CD4-positive, alpha-beta memory T cell (primary cell): ENCODE measurements at regions of chr2 and their contacts with region 1.

Region 1: GRCh38 chr2:202588647-202589581 is 45.9 kb upstream of the FAM117B start:
- DNase-seq: peak; percentile 71 to 77 (median 72)
- H3K4me3 ChIP-seq: no peak overlapping the region
- H3K4me3 Mint-ChIP-seq: peak overlapping the region in 2 of 8 donors; percentile 43 to 50
- H3K27ac ChIP-seq: no peak overlapping the region
- H3K27ac Mint-ChIP-seq: peak overlapping the region in 1 of 7 donors; percentile 4
- H3K4me1 ChIP-seq: peaks cover 5% of the 10 kb centered on the region
- H3K4me1 Mint-ChIP-seq: peaks cover 4 to 8% (median 7%) of the 10 kb centered on the region in 4 donors
- H3K27me3 ChIP-seq: no peaks in the 10 kb centered on the region
- H3K27me3 Mint-ChIP-seq: peaks cover 0 to 2% of the 10 kb centered on the region in 2 donors

Region 2: DNA sequence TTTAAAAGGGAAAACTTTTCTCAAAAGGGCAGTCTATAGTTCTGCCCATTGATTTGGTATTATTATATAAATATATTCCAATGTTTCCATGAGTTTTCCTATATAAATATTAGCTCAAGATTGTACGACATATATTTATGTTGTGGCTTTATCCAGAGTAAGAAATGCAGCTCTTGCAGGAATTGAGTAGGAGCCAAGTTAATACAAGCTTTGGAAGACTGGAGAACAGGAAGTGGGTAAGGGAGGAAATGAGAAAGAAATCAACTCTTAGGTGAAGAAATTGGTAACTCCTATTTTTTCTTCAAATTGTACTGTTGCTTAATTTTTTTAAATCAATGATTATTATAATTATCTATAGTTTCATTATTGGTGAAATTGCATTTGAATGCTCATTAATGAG is 59.5 kb before region 1 on chr2:
- CTCF ChIA-PET with region 1: no interaction called
- POLR2A ChIA-PET with region 1: no interaction called
- intact Hi-C with region 1: no loop called
- DNase-seq: no peak
- H3K4me3 ChIP-seq: no peak overlapping the region
- H3K4me3 Mint-ChIP-seq: peak overlapping the region in 4 of 8 donors; percentile 26 to 76 (median 45)
- H3K27ac ChIP-seq: no peak overlapping the region
- H3K27ac Mint-ChIP-seq: no peak overlapping the region
- H3K4me1 ChIP-seq: peaks cover 19% of the 10 kb centered on the region
- H3K4me1 Mint-ChIP-seq: peaks cover 8 to 23% (median 16%) of the 10 kb centered on the region in 4 donors
- H3K27me3 ChIP-seq: no peaks in the 10 kb centered on the region
- H3K27me3 Mint-ChIP-seq: no peaks in the 10 kb centered on the region

Region 3: DNA sequence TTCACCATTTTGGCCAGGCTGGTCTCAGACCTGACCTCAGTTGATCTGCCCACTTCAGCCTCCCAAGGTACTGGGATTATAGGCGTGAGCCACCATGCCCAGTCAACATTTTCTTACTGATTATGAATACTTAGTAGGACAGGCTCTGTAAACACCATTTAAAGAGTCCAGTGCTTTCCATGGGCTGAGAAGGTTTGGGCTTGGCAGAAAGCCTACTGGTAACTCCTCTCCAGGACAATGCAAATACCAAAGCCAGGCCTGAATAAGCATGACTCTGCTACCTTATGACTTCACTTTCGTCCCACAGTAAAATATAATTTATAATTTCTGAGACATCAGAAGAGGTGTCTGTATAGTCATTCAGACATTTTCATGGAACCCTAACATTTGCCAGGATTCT is 14.4 kb before region 1 on chr2:
- CTCF ChIA-PET with region 1: interaction called, 16 read pairs
- POLR2A ChIA-PET with region 1: no interaction called
- intact Hi-C with region 1: no loop called
- DNase-seq: no peak
- H3K4me3 ChIP-seq: no peak overlapping the region
- H3K4me3 Mint-ChIP-seq: no peak overlapping the region
- H3K27ac ChIP-seq: no peak overlapping the region
- H3K27ac Mint-ChIP-seq: peak overlapping the region in 1 of 7 donors; percentile 37
- H3K4me1 ChIP-seq: no peaks in the 10 kb centered on the region
- H3K4me1 Mint-ChIP-seq: no peaks in the 10 kb centered on the region
- H3K27me3 ChIP-seq: no peaks in the 10 kb centered on the region
- H3K27me3 Mint-ChIP-seq: no peaks in the 10 kb centered on the region

Region 4: DNA sequence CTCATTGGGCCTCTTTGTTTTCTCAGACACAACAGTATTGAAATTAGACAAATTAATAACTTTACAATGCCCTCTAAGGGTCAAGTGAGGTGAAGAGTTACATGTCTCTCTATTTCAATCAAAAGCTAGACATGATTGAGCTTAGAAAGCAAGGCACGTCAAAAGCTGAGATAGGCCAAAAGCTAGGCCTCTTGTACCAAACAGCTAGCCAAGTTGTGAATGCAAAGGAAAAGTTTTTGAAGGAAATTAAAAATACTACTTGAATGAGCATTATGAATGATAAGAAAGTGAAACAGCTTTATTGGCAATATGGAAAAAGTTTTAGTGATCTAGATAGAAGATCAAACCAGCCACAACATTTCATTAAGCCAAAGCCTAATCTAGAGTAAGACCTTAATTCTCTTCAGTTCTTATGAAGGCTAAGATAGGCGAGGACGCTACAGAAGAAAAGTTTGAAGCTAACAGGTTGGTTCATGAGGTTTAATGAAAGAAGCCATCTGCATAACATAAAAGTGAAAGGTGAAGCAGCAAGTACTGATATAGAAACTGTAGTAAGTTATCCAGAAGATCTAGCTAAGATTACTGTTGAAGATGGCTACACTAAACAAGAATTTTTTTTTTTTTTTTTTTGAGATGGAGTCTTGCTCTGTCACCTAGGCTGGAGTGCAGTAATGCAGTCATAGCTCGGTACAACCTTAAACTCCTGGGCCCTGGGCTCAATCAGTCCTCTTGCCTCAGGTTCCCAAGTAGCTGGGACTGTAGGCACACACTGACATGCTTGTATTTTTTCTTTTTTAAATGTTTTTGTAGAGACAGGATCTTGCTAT is 111.4 kb after region 1 on chr2:
- CTCF ChIA-PET with region 1: interaction called, 66 read pairs
- POLR2A ChIA-PET with region 1: no interaction called
- intact Hi-C with region 1: loop called (anchors 1 kb)
- DNase-seq: peak in 3 of 5 donors; percentile 5 to 11 (median 6)
- H3K4me3 ChIP-seq: no peak overlapping the region
- H3K4me3 Mint-ChIP-seq: peak overlapping the region in 2 of 8 donors; percentile 13 to 22
- H3K27ac ChIP-seq: no peak overlapping the region
- H3K27ac Mint-ChIP-seq: peak overlapping the region in 6 of 7 donors; percentile 10 to 83 (median 50)
- H3K4me1 ChIP-seq: peaks cover 23% of the 10 kb centered on the region
- H3K4me1 Mint-ChIP-seq: peaks cover 20 to 46% (median 36%) of the 10 kb centered on the region in 4 donors
- H3K27me3 ChIP-seq: no peaks in the 10 kb centered on the region
- H3K27me3 Mint-ChIP-seq: no peaks in the 10 kb centered on the region

Region 5: GRCh38 chr2:202870431-202871299 is 281.8 kb after region 1 on chr2:
- CTCF ChIA-PET with region 1: interaction called, 53 read pairs
- POLR2A ChIA-PET with region 1: interaction called, 4 read pairs
- intact Hi-C with region 1: loop called (anchors 1 kb)
- DNase-seq: peak; percentile 44 to 57 (median 51)
- H3K4me3 ChIP-seq: peak overlapping the region; percentile 59 to 62
- H3K4me3 Mint-ChIP-seq: peak overlapping the region; percentile 87 to 97 (median 94)
- H3K27ac ChIP-seq: peak overlapping the region; percentile 51
- H3K27ac Mint-ChIP-seq: peak overlapping the region in 6 of 7 donors; percentile 18 to 71 (median 59)
- H3K4me1 ChIP-seq: peaks cover 3% of the 10 kb centered on the region
- H3K4me1 Mint-ChIP-seq: peaks cover 5 to 13% (median 9%) of the 10 kb centered on the region in 4 donors
- H3K27me3 ChIP-seq: no peaks in the 10 kb centered on the region
- H3K27me3 Mint-ChIP-seq: no peaks in the 10 kb centered on the region

Region 6: GRCh38 chr2:203453858-203454451 is 865.0 kb after region 1 on chr2:
- CTCF ChIA-PET with region 1: interaction called, 3 read pairs
- POLR2A ChIA-PET with region 1: no interaction called
- intact Hi-C with region 1: loop called (anchors 5 kb)
- DNase-seq: peak; percentile 33 to 44 (median 35)
- H3K4me3 ChIP-seq: no peak overlapping the region
- H3K4me3 Mint-ChIP-seq: no peak overlapping the region
- H3K27ac ChIP-seq: no peak overlapping the region
- H3K27ac Mint-ChIP-seq: no peak overlapping the region
- H3K4me1 ChIP-seq: no peaks in the 10 kb centered on the region
- H3K4me1 Mint-ChIP-seq: no peaks in the 10 kb centered on the region
- H3K27me3 ChIP-seq: no peaks in the 10 kb centered on the region
- H3K27me3 Mint-ChIP-seq: no peaks in the 10 kb centered on the region